Mammary epithelial cell (primary cell): ENCODE measurements at regions of chr4 and their contacts with region 1.

Region 1: GRCh38 chr4:65831828-65832227 is 161.5 kb upstream of the EPHA5 start:
- DNase-seq: no peak
- H3K4me3 ChIP-seq: no peak overlapping the region
- H3K27ac ChIP-seq: no peak overlapping the region
- H3K4me1 ChIP-seq: no peaks in the 10 kb centered on the region
- H3K27me3 ChIP-seq: no peaks in the 10 kb centered on the region
- CTCF ChIP-seq: no peak

Region 2: DNA sequence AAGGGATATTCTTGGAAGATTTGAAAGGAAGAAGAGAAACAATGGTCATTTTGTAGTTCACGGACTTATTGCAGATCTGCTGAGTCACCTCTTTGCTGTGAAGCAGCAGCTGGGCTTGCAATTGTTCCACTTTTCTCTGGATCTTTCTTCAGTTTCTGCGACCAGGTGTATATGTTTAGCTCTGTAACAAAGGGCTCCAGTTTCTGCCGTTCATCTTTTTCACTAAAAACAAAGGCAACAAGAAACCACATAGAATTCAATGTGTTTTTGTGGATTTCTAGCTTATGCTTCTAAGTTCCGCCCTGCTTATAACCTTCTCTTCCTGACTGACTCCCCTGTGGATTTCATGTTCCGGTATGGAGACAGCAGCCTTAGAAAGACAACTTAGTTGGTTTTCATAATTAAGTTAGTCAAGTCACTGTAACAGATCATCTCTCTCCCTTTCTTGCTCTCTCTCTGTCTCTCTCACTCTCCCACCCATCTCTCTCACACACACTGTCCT is 40.0 kb before region 1 on chr4:
- CTCF ChIA-PET with region 1: no interaction called
- dilution Hi-C with region 1: no loop called
- in situ Hi-C with region 1: no loop called
- intact Hi-C with region 1: no loop called
- DNase-seq: peak; percentile 4
- H3K4me3 ChIP-seq: peak overlapping the region in 1 of 3 experiments; percentile 5
- H3K27ac ChIP-seq: no peak overlapping the region
- H3K4me1 ChIP-seq: peaks cover 8% of the 10 kb centered on the region
- H3K27me3 ChIP-seq: no peaks in the 10 kb centered on the region
- CTCF ChIP-seq: no peak

Region 3: DNA sequence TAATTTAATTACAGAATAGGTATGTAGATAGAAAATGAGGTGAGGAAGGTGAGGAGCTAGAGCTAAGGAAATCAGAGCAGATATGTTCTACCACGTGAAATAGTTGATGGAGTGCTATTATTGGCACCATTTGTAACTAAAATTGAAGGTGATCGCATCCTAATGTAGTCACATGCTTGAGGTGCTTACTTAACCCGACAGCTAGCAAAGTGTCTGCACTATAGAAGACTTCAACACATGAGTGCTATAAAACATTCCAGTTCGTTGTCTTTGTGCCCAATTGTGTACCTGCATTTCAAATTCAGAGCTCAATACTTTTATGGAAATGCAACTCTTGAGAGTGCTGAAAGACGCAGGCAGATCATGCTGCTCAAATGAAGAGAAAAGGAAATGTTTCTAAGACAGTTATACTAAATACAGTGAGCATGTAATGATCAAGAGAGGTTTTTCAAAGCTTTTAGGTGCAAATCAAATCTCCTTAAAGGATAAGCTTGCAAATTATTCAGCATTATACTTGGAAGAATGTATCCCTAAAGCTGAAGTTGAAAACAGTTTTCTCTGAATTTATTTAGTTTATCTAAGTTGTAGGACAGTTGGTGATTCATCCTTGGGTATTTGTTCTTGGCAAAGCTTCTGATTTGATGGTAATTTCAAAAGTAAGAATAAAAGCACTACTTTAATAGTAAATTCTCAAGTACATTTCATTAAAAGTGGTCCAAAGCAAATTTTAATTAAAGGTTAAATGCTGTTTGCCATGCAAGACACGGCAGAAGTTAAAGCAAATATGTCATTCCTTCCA is 62.3 kb after region 1 on chr4:
- CTCF ChIA-PET with region 1: no interaction called
- dilution Hi-C with region 1: no loop called
- in situ Hi-C with region 1: no loop called
- intact Hi-C with region 1: loop called (anchors 10 kb)
- DNase-seq: no peak
- H3K4me3 ChIP-seq: no peak overlapping the region
- H3K27ac ChIP-seq: no peak overlapping the region
- H3K4me1 ChIP-seq: no peaks in the 10 kb centered on the region
- H3K27me3 ChIP-seq: no peaks in the 10 kb centered on the region
- CTCF ChIP-seq: no peak